Natural killer cell (primary cell): ENCODE measurements at regions of chr19 and their contacts with region 1.

Region 1: DNA sequence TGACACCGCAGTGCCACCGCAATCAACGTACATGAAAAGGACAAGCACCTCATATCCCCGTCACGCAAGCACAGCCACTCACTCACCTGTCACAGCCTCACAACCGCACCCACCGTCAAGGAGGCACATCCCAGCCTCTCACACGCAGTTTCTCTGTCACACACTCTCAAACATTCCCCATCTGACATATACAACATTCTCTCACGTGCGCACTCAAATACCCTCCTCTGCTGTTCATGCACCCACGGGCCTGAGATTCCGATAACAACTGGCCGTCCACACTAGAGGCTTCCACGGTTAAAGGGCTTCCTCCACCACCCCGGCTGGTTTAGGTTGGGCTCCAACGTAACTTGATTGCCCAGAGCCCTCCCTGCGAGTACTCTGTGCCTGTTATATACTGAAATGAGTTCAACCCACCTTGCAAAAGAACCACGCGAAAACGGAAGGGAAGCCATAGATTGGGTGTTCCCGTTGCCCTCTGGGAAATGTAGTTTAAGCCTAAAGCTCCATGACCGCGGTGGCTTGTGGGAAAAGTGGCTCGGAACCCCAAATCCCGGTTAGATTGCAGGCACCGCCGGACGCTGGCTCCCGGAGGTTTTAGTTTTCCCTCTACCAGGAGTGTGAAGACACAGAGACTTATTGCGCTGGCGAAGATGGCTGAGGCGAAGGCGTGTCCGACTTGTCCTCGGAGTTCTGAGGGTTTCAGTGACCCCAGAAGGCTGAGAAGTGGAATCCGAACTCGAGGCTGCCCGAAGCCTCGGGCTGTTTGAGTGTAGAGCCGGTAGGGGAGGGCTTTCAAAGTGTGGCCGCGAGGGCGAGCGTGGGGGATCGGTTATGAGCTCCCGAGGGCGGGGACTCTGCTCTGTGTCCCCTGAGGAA is at the start of gene ZNF573:
- DNase-seq: peak; percentile 69 to 96
- ATAC-seq: peak; percentile 83 to 91 (median 83)
- H3K4me3 ChIP-seq: peak within 1 kb of the TSS; percentile 90
- H3K4me3 Mint-ChIP-seq: peak within 1 kb of the TSS; percentile 99
- H3K27ac ChIP-seq: peak within 1 kb of the TSS; percentile 95
- H3K27ac Mint-ChIP-seq: peak within 1 kb of the TSS; percentile 91 to 97
- H3K4me1 ChIP-seq: peaks cover 9% of the 10 kb centered on the region
- H3K4me1 Mint-ChIP-seq: peaks cover 31 to 36% of the 10 kb centered on the region in 2 donors
- H3K27me3 ChIP-seq: no peaks in the 10 kb centered on the region
- H3K27me3 Mint-ChIP-seq: no peaks in the 10 kb centered on the region
- CTCF ChIP-seq: no peak
- total RNA-seq, gene ZNF573: 10.0 to 15.5 (median 13.4) TPM

Region 2: GRCh38 chr19:36214386-36215275 is 1564.7 kb before region 1 on chr19 and contains the starts of genes ZNF146 and ZNF565:
- intact Hi-C with region 1: loop called (anchors 1 kb)
- DNase-seq: peak; percentile 90 to 97
- ATAC-seq: peak; percentile 81 to 95 (median 86)
- H3K4me3 ChIP-seq: peak within 1 kb of the TSS; percentile 92
- H3K4me3 Mint-ChIP-seq: no peak within 1 kb of the TSS
- H3K27ac ChIP-seq: peak within 1 kb of the TSS; percentile 91
- H3K27ac Mint-ChIP-seq: no peak within 1 kb of the TSS
- H3K4me1 ChIP-seq: peaks cover 18% of the 10 kb centered on the region
- H3K4me1 Mint-ChIP-seq: peaks cover 12 to 14% of the 10 kb centered on the region in 2 donors
- H3K27me3 ChIP-seq: no peaks in the 10 kb centered on the region
- H3K27me3 Mint-ChIP-seq: no peaks in the 10 kb centered on the region
- CTCF ChIP-seq: no peak
- total RNA-seq, gene ZNF146: 20.3 to 37.3 (median 21.5) TPM
- total RNA-seq, gene ZNF565: 7.7 to 19.1 (median 10.5) TPM

Region 3: DNA sequence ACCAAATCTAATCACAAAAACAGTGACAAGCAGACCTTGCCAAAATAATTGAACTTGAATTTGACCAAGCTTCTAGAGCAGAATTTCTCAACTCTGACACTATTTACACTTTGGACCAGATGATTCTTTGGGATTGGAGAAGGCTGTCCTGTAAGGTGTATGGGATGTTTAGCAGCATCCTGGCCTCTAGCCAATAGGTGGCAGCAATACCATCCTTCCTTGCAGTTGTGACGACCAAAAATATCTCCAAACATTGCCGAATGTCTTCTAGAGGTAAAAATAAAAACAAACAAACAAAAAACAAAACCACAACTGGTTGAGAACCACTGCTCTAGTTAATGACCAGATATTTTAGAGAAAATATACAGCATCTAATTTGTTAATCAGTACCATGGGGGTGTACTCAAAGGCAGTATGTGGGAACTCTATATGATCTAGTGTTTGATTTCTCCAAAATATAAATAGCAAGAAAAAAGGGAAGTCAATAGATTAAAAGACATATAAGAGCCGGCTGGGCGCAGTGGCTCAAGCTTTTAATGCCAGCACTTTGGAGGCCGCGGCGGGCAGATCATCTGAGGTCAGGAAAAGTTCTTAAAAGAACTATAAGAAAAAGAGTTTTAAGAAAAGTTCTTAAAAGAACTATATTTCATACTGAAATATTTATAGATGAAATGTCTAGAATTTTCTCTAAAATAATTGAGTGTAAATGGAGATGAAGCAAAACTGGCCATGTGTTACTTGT is 469.4 kb before region 1 on chr19:
- intact Hi-C with region 1: loop called (anchors 10 kb)
- DNase-seq: peak in 1 of 2 donors; percentile 66
- ATAC-seq: peak in 1 of 3 donors; percentile 38
- H3K4me3 ChIP-seq: no peak overlapping the region
- H3K4me3 Mint-ChIP-seq: no peak overlapping the region
- H3K27ac ChIP-seq: no peak overlapping the region
- H3K27ac Mint-ChIP-seq: no peak overlapping the region
- H3K4me1 ChIP-seq: peaks cover 15% of the 10 kb centered on the region
- H3K4me1 Mint-ChIP-seq: peaks cover 11 to 16% of the 10 kb centered on the region in 2 donors
- H3K27me3 ChIP-seq: no peaks in the 10 kb centered on the region
- H3K27me3 Mint-ChIP-seq: peaks cover 0 to 3% of the 10 kb centered on the region in 2 donors
- CTCF ChIP-seq: peak; percentile 51

Region 4: GRCh38 chr19:37691881-37692504 is 87.4 kb before region 1 on chr19:
- intact Hi-C with region 1: loop called (anchors 1 kb)
- DNase-seq: peak; percentile 66 to 87
- ATAC-seq: peak; percentile 91 to 97 (median 95)
- H3K4me3 ChIP-seq: peak overlapping the region; percentile 70
- H3K4me3 Mint-ChIP-seq: peak overlapping the region; percentile 99
- H3K27ac ChIP-seq: peak overlapping the region; percentile 79
- H3K27ac Mint-ChIP-seq: peak overlapping the region; percentile 93 to 99
- H3K4me1 ChIP-seq: peaks cover 3% of the 10 kb centered on the region
- H3K4me1 Mint-ChIP-seq: peaks cover 9 to 11% of the 10 kb centered on the region in 2 donors
- H3K27me3 ChIP-seq: no peaks in the 10 kb centered on the region
- H3K27me3 Mint-ChIP-seq: no peaks in the 10 kb centered on the region
- CTCF ChIP-seq: no peak